ENCODE measurements at regions of chr21 and their contacts with region 1.

Region 1: DNA sequence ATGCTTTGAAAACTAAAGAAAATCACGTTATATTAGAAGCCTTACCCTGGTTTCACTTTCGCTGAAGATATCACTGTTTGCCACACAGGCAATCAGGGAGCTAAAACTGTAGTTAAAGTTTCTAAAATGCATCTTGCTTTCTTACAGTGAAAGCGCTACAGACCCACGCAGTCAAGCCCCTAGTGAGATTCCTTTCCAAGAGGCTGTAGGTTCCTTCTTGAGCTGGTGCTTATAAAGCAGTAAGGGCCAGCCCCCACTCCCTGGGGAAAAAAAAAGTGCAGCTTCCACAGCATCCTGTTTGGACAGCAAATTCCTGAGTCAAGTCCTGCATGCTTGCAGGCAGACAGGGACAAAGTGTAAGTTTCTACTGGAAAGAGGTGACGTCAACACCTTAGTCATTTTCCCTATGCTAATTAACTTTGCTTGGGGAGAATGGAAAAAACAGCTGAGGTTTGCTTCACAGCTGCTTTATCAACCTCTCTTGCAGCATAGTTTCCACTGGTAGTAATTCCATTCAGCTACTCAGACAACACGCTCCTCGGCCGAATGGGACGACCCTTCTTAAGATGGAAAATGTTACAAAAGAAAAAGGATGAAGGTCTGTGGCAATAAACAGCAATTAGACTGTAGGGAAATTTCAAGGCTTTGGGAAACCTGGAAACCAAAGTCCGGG is 14.7 kb upstream of the KCNE1 start:
- DNase-seq: peak; percentile 100
- H3K4me3 ChIP-seq: peak overlapping the region; percentile 71
- H3K27ac ChIP-seq: peak overlapping the region; percentile 93
- H3K27me3 ChIP-seq: no peaks in the 10 kb centered on the region
- CTCF ChIP-seq: no peak

Region 2: DNA sequence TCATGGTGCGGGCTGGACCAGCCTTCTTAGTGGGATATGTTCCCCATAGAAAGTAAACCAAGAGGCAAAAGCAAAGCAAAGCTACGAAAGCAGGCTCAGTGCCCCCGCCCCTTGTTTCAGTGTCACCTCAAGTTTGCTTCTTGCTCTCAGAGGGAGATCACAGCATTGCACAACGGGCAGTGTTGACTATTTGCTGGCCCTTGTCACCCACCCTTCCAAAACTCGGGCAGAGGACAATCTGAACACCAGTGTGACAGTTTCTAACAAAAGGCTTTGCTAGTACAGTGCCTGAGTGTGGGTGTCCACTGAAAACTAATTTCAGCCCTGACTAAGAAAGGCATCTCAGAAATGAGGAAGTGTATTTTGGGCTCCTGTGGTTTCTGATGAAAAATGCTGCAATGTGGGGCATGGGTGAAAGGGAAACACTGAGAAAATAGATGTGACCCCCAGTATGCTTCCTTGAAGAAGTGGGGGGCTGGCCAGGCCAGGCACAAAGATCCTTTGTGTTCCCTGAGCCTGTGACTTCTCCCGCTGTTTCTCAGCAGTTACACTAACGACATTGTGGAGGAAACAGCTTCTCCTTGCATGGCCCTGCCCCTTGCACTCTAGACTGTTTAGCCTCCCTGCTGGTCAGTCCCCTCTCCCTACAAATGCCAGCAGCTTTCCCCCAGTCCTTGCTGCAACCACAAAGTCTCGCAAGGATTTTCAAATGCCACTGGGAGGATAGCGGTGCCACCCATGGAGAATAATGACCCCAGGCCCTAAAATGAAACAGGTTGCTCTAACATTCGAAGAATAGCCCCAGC is 18.5 kb after region 1 on chr21:
- CTCF ChIA-PET with region 1: interaction called, 3 read pairs
- POLR2A ChIA-PET with region 1: interaction called, 19 read pairs
- DNase-seq: no peak
- H3K4me3 ChIP-seq: peak overlapping the region; percentile 25; the same call in 1 of the 2 replicates
- H3K27ac ChIP-seq: peak overlapping the region; percentile 97
- H3K27me3 ChIP-seq: no peaks in the 10 kb centered on the region
- CTCF ChIP-seq: peak; percentile 16; the same call in 1 of the 2 replicates

Region 3: DNA sequence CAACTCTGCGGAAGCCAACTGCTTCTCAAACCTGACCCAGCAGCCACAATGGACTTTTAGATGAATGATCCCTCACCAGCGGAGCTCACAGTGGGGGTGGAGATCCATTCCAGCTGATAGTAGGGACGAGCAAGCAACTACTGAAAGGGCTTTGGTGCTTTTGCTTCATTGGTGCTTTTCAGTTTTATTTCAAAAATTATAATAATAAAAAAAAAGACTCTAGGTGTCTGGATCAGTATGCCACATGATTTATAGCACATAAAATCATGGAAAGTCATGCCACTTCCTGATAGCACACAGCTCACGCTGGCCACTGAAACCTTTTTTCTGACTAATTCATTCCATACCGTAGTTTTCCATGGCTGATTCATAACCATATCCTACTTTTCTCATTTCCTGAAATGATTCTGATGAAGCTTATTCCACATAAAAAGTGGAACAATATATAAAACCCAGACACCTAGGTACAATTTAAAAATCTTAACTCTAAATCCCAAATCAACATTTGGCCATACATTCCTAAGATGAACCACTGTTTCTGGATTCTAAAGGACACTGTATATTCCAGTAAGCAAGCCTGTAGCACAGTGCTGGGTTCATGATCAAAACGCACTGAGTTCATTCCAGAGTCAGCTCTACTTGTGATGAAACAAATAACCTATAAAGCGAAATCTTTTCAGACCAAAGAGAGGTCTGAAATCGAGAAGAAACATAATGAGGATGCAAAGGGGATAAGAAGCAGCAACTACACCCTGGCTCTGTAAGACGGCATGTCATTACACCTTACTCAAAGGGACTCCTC is 26.6 kb after region 1 on chr21:
- CTCF ChIA-PET with region 1: no interaction called
- POLR2A ChIA-PET with region 1: interaction called, 15 read pairs
- DNase-seq: no peak
- H3K4me3 ChIP-seq: peak overlapping the region; percentile 34
- H3K27ac ChIP-seq: peak overlapping the region; percentile 84
- H3K27me3 ChIP-seq: no peaks in the 10 kb centered on the region
- CTCF ChIP-seq: no peak

Region 4: DNA sequence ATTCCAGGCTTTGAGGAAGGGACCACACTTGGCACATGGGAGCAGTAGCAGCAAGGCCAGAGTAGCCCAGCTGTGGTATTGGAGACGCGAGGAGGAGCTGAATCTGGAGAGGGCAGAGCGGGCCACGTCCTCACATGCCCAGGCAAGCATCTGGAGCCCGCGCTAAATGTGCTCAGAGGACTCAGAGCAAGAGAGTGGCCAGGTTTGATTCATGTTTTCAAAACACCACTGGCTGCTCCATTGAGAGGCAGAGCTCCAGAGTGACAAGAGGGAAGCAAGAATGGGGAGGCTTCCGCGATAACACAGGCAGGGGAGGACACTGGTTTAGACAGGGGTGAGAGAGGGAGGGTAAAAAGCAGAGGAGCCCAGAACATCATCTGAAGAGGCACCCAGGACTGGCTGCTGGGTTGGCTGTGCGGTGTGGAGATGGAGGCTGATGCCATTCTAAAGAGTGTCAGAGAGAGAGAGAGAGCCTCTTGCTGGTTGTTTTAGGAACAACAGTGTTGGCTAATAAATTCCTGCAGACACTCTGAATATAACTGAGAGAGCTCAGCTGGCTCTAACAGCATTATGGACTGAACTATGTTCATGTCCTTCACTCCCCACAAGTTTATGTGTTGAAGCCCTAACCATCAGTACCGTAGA is 55.9 kb after region 1 on chr21:
- CTCF ChIA-PET with region 1: interaction called, 6 read pairs
- POLR2A ChIA-PET with region 1: interaction called, 12 read pairs
- DNase-seq: peak; percentile 24
- H3K4me3 ChIP-seq: no peak overlapping the region
- H3K27ac ChIP-seq: no peak overlapping the region
- H3K27me3 ChIP-seq: no peaks in the 10 kb centered on the region
- CTCF ChIP-seq: peak; percentile 71

Region 5: GRCh38 chr21:34707876-34708325 is 181.1 kb after region 1 on chr21:
- CTCF ChIA-PET with region 1: no interaction called
- POLR2A ChIA-PET with region 1: no interaction called
- DNase-seq: no peak
- H3K4me3 ChIP-seq: no peak overlapping the region
- H3K27ac ChIP-seq: no peak overlapping the region
- H3K27me3 ChIP-seq: no peaks in the 10 kb centered on the region
- CTCF ChIP-seq: no peak